IMR-90 (cell line): ENCODE measurements at regions of chr2 and their contacts with region 1.

Region 1: DNA sequence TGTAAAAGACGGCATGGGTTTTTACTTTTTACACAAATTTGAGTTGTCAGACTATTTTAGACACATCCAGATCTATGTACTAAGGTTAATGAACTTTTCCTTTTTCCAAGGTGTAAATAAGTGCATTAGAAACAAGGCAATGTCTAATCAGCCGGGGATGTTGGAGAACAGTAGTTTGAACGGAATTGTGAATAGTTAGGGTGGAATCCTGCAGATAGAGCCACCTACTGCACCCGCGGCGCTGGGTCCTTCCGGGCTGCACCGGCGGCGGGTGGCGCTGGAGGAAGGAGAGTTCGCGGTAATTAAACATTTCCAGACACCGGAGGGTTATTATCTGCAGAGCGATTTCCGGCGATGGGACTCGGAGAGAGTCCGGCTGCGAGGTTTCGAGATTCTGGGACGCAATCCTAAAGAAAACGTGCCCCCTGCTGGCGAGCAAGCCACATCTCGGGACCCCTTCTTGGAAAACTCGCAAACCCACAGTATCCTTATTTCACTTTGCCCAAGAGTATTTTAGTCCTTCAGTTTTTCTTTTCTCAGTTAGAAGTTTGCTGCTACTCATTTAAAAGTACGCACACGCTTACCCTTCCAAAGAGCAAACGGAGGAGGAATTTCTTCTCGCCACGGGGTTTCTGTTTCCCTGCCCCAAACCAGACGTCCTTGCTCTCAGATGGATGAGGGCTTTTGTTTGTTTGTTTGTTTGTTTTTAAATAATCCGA is 4.5 kb upstream of the OSR1 start:
- DNase-seq: peak; percentile 86
- ATAC-seq: peak; percentile 57
- H3K4me3 ChIP-seq: peak overlapping the region; percentile 96
- H3K27ac ChIP-seq: peak overlapping the region; percentile 43; the same call in 1 of the 2 replicates
- H3K4me1 ChIP-seq: peaks cover 5% of the 10 kb centered on the region; the same call in 1 of the 2 replicates
- H3K27me3 ChIP-seq: peaks cover 11% of the 10 kb centered on the region
- CTCF ChIP-seq: peak; percentile 90
- POLR2A ChIP-seq: no peak
- RAD21 ChIP-seq: peak; percentile 92

Region 2: GRCh38 chr2:18387441-18388206 is 975.3 kb before region 1 on chr2:
- CTCF ChIA-PET with region 1: interaction called, 4 read pairs
- POLR2A ChIA-PET with region 1: no interaction called
- dilution Hi-C with region 1: no loop called
- in situ Hi-C with region 1: no loop called
- intact Hi-C with region 1: loop called (anchors 2 kb)
- DNase-seq: peak; percentile 79
- ATAC-seq: peak; percentile 99
- H3K4me3 ChIP-seq: no peak overlapping the region
- H3K27ac ChIP-seq: no peak overlapping the region
- H3K4me1 ChIP-seq: no peaks in the 10 kb centered on the region
- H3K27me3 ChIP-seq: no peaks in the 10 kb centered on the region
- CTCF ChIP-seq: peak; percentile 94
- POLR2A ChIP-seq: no peak
- RAD21 ChIP-seq: peak; percentile 96

Region 3: GRCh38 chr2:18520451-18521425 is 842.2 kb before region 1 on chr2:
- CTCF ChIA-PET with region 1: interaction called, 4 read pairs
- POLR2A ChIA-PET with region 1: no interaction called
- dilution Hi-C with region 1: no loop called
- in situ Hi-C with region 1: loop called (anchors 5 kb)
- intact Hi-C with region 1: loop called (anchors 1 kb)
- DNase-seq: peak; percentile 78
- ATAC-seq: peak; percentile 58
- H3K4me3 ChIP-seq: no peak overlapping the region
- H3K27ac ChIP-seq: no peak overlapping the region
- H3K4me1 ChIP-seq: peaks cover 21% of the 10 kb centered on the region
- H3K27me3 ChIP-seq: no peaks in the 10 kb centered on the region
- CTCF ChIP-seq: peak; percentile 95
- POLR2A ChIP-seq: peak; percentile 39; the same call in 1 of the 2 replicates
- RAD21 ChIP-seq: peak; percentile 97

Region 4: GRCh38 chr2:18889565-18890332 is 473.2 kb before region 1 on chr2:
- CTCF ChIA-PET with region 1: no interaction called
- POLR2A ChIA-PET with region 1: no interaction called
- dilution Hi-C with region 1: no loop called
- in situ Hi-C with region 1: no loop called
- intact Hi-C with region 1: loop called (anchors 5 kb)
- DNase-seq: no peak
- ATAC-seq: no peak
- H3K4me3 ChIP-seq: no peak overlapping the region
- H3K27ac ChIP-seq: no peak overlapping the region
- H3K4me1 ChIP-seq: peaks cover 14% of the 10 kb centered on the region
- H3K27me3 ChIP-seq: no peaks in the 10 kb centered on the region
- CTCF ChIP-seq: no peak
- POLR2A ChIP-seq: no peak
- RAD21 ChIP-seq: no peak

Region 5: GRCh38 chr2:18987592-18988073 is 375.3 kb before region 1 on chr2:
- CTCF ChIA-PET with region 1: no interaction called
- POLR2A ChIA-PET with region 1: no interaction called
- dilution Hi-C with region 1: no loop called
- in situ Hi-C with region 1: no loop called
- intact Hi-C with region 1: loop called (anchors 5 kb)
- DNase-seq: peak; percentile 95
- ATAC-seq: peak; percentile 62
- H3K4me3 ChIP-seq: no peak overlapping the region
- H3K27ac ChIP-seq: peak overlapping the region; percentile 63; the same call in 1 of the 2 replicates
- H3K4me1 ChIP-seq: peaks cover 11% of the 10 kb centered on the region
- H3K27me3 ChIP-seq: no peaks in the 10 kb centered on the region
- CTCF ChIP-seq: peak; percentile 44
- POLR2A ChIP-seq: no peak
- RAD21 ChIP-seq: peak; percentile 27

Region 6: DNA sequence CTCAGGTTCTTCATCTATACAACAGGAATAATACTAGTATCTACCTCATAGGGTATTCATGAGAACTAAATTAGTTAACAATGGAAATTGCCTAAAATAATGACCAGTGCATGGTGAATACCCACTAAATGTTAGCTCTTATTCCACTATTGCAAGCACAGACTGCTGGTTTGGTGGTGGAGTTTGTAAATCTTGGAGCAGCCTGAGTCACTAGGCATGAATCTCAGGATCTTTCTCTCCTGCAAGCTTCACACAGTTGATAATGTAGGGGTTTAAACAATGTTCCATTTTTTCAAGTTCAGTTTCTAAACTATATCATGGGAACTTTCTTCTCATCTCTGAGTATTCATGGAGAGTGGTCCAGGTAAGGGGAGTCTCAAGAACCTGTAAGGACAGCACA is 88.5 kb before region 1 on chr2:
- CTCF ChIA-PET with region 1: no interaction called
- POLR2A ChIA-PET with region 1: interaction called, 10 read pairs
- dilution Hi-C with region 1: no loop called
- in situ Hi-C with region 1: no loop called
- intact Hi-C with region 1: no loop called
- DNase-seq: peak; percentile 59
- ATAC-seq: peak; percentile 92
- H3K4me3 ChIP-seq: no peak overlapping the region
- H3K27ac ChIP-seq: no peak overlapping the region
- H3K4me1 ChIP-seq: peaks cover 2% of the 10 kb centered on the region
- H3K27me3 ChIP-seq: no peaks in the 10 kb centered on the region
- CTCF ChIP-seq: no peak
- POLR2A ChIP-seq: no peak
- RAD21 ChIP-seq: no peak